A673 (cell line): ENCODE measurements at regions of chr11 and their contacts with region 1.

Region 1: DNA sequence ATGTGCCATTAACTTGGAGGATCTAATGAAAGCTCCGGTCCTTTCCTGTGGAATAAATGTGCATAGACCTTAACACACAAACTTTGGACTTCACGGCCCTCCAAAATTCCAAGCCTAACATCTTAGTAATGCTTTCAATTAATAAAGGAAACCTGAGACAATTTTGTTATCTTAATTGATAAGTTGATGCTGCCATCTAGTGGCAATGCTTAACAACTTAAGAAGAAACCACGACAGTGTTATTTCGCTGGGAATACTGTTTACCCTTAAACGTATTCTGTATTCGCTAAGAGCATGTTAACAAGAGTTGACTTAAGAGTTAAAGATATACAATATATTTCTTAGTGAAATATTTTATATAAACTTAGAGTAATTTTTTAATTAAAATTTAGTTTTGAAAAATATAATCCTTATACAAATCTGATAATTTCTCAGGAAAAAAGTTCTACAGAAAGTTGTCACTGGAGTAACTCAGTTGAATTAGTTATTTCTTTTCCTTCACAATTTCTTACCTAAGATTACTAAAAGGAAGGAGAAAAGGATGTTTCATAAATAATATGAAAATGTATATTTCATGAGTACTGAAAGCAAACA is 35.0 kb upstream of the OR9G4 start:
- DNase-seq: peak; percentile 78
- H3K4me3 ChIP-seq: no peak overlapping the region
- H3K27ac ChIP-seq: no peak overlapping the region
- H3K4me1 ChIP-seq: no peaks in the 10 kb centered on the region
- H3K27me3 ChIP-seq: no peaks in the 10 kb centered on the region
- CTCF ChIP-seq: peak; percentile 73

Region 2: GRCh38 chr11:55714982-55715888 is 1068.3 kb before region 1 on chr11:
- CTCF ChIA-PET with region 1: no interaction called
- POLR2A ChIA-PET with region 1: no interaction called
- intact Hi-C with region 1: loop called (anchors 2 kb)
- DNase-seq: peak; percentile 58
- H3K4me3 ChIP-seq: no peak overlapping the region
- H3K27ac ChIP-seq: no peak overlapping the region
- H3K4me1 ChIP-seq: no peaks in the 10 kb centered on the region
- H3K27me3 ChIP-seq: no peaks in the 10 kb centered on the region
- CTCF ChIP-seq: peak; percentile 76

Region 3: DNA sequence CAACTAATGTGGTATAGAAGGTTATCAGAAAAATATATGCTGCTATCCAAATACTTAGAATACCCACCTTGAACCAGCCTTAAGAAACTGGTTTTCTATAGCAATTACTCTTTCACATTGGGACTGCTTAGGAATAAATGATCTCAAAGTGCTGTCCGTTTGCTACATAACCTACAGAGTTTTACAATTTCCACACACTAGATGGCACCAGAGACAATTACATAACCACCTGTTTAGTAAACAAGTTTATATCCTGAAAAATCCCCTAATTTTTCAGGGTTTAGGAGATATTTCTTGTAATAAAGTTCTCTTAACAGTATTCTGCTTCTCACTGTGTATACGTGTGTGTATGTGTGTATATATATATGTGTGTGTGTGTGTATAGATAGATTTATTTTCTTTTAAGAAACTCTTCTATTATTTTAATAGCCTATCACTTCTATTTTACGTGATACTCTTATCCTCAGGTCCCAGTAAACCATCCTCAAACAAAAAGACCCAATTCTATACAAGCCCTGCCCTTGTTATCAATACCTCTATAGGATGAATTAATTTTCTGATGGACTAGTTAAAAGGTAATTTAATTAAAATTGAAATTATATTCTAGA is 840.7 kb before region 1 on chr11:
- CTCF ChIA-PET with region 1: no interaction called
- POLR2A ChIA-PET with region 1: no interaction called
- intact Hi-C with region 1: loop called (anchors 1 kb)
- DNase-seq: peak; percentile 50
- H3K4me3 ChIP-seq: no peak overlapping the region
- H3K27ac ChIP-seq: no peak overlapping the region
- H3K4me1 ChIP-seq: no peaks in the 10 kb centered on the region
- H3K27me3 ChIP-seq: no peaks in the 10 kb centered on the region
- CTCF ChIP-seq: peak; percentile 67

Region 4: GRCh38 chr11:56522008-56522407 is 261.5 kb before region 1 on chr11:
- CTCF ChIA-PET with region 1: no interaction called
- POLR2A ChIA-PET with region 1: no interaction called
- intact Hi-C with region 1: loop called (anchors 5 kb)
- DNase-seq: peak; percentile 22
- H3K4me3 ChIP-seq: no peak overlapping the region
- H3K27ac ChIP-seq: no peak overlapping the region
- H3K4me1 ChIP-seq: no peaks in the 10 kb centered on the region
- H3K27me3 ChIP-seq: no peaks in the 10 kb centered on the region
- CTCF ChIP-seq: peak; percentile 49

Region 5: DNA sequence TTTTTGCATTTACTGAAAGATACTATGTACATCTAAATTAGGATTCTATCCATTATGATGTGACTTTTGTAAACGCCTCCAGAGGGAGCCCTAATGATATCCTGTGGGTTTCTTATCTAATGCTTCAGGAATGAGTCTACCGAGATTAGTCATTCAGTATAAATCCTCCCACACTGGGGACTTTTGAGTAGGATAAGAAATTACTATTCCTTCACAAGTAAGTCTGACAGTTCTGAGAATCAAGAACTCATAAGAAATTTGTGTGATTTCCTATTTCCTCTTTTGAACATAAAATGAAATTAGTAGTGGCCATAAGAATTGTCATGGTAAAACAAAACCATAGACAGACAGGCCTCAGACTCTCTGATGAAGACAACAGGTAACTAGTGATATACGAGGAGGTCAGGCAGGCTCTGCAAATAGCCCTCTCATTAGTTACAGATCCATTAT is 158.9 kb before region 1 on chr11:
- CTCF ChIA-PET with region 1: no interaction called
- POLR2A ChIA-PET with region 1: no interaction called
- intact Hi-C with region 1: loop called (anchors 1 kb)
- DNase-seq: peak; percentile 84
- H3K4me3 ChIP-seq: no peak overlapping the region
- H3K27ac ChIP-seq: no peak overlapping the region
- H3K4me1 ChIP-seq: no peaks in the 10 kb centered on the region
- H3K27me3 ChIP-seq: no peaks in the 10 kb centered on the region
- CTCF ChIP-seq: peak; percentile 68

Region 6: GRCh38 chr11:56659755-56660154 is 123.8 kb before region 1 on chr11:
- CTCF ChIA-PET with region 1: no interaction called
- POLR2A ChIA-PET with region 1: no interaction called
- intact Hi-C with region 1: loop called (anchors 10 kb)
- DNase-seq: no peak
- H3K4me3 ChIP-seq: no peak overlapping the region
- H3K27ac ChIP-seq: no peak overlapping the region
- H3K4me1 ChIP-seq: no peaks in the 10 kb centered on the region
- H3K27me3 ChIP-seq: no peaks in the 10 kb centered on the region
- CTCF ChIP-seq: no peak

Region 7: DNA sequence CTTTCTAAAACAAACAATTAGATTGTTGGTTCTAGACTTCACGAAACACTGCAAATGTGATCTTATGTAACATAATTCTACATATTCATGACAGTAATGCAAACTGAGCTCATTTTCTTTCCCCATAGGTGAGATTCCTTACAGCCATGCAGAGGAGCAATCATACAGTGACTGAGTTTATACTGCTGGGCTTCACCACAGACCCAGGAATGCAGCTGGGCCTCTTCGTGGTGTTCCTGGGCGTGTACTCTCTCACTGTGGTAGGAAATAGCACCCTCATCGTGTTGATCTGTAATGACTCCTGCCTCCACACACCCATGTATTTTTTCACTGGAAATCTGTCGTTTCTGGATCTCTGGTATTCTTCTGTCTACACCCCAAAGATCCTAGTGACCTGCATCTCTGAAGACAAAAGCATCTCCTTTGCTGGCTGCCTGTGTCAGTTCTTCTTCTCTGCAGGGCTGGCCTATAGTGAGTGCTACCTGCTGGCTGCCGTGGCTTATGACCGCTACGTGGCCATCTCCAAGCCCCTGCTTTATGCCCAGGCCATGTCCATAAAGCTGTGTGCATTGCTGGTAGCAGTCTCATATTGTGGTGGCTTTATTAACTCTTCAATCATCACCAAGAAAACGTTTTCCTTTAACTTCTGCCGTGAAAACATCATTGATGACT is 83.2 kb before region 1 on chr11:
- CTCF ChIA-PET with region 1: no interaction called
- POLR2A ChIA-PET with region 1: no interaction called
- intact Hi-C with region 1: loop called (anchors 10 kb)
- DNase-seq: peak; percentile 11
- H3K4me3 ChIP-seq: no peak overlapping the region
- H3K27ac ChIP-seq: no peak overlapping the region
- H3K4me1 ChIP-seq: no peaks in the 10 kb centered on the region
- H3K27me3 ChIP-seq: no peaks in the 10 kb centered on the region
- CTCF ChIP-seq: no peak